ENCODE measurements at regions of chr1 and their contacts with region 1.

Region 1: DNA sequence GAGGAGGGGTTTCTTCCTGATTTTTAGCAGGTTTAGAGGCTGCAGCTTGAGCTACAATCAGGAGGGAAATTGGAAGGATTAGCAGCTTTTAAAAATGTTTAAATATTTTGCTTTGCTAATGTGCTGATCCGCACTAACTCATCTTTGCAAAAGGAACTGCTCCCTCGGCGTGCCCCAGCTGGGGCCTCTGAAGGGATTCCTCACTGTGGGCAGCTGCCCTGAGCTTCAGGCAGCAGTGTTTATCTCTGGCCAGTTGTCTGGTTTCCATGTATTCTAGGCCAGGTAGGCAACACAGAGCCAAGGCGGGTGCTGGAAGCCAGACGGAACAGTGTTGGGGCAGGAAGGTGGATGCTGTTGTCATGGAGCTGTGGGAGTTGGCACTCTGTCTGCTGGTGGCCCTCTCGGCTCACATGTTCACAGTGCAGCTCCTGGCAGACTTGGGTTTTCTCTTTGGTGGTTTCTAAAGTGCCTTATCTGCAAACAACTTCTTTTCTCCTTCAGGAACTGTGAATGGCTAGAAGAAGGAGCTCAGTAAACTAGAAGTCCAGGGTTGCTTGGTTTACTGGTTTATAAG is 18.9 kb downstream of the NECAP2 start:
- DNase-seq: no peak
- H3K4me3 ChIP-seq: no peak overlapping the region
- H3K27ac ChIP-seq: no peak overlapping the region
- H3K4me1 ChIP-seq: no peaks in the 10 kb centered on the region
- H3K27me3 ChIP-seq: no peaks in the 10 kb centered on the region
- CTCF ChIP-seq: no peak
- EP300 ChIP-seq: no peak
- POLR2A ChIP-seq: no peak
- RAD21 ChIP-seq: no peak

Region 2: DNA sequence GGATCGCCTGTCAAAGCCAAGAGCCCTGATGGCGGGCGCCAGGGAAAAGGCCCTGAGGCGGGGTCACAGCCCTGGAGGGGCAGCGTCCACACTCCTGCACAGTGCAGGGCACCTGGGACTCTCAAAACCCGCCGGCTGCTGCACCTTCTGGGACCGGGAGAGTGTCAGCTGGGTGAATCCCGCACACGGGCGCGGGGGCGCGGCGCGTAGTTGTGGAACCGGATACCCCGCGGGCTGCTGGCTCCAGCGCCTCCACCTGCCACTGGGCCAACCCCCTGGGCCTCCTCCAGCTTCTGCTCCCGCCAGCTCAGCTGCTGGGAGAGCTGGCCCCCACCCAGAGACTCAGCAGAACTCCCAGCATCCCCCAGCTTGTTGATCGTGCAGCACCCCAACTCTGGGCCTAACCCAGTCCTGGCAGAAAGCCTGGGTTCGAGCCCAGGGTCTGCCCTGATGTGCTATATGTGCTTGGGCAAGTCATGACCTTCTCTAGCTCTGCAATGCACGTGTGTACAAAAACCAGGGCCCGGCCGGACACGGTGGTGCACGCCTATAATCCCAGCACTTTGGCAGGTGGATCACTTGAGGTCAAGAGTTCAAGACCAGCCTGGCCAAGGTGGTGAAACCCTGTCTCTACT is 14.8 kb after region 1 on chr1:
- CTCF ChIA-PET with region 1: interaction called, 17 read pairs
- POLR2A ChIA-PET with region 1: interaction called, 4 read pairs
- DNase-seq: no peak
- H3K4me3 ChIP-seq: no peak overlapping the region
- H3K27ac ChIP-seq: no peak overlapping the region
- H3K4me1 ChIP-seq: no peaks in the 10 kb centered on the region
- H3K27me3 ChIP-seq: no peaks in the 10 kb centered on the region
- CTCF ChIP-seq: no peak
- EP300 ChIP-seq: no peak
- POLR2A ChIP-seq: no peak
- RAD21 ChIP-seq: no peak

Measured in H1 (cell line).